ENCODE measurements at regions of chr4 and their contacts with region 1.

Region 1: GRCh38 chr4:174714393-174715211 is 114.4 kb downstream of the GLRA3 start:
- DNase-seq: peak; percentile 23
- H3K4me3 Mint-ChIP-seq: no peak overlapping the region
- H3K27ac Mint-ChIP-seq: no peak overlapping the region
- H3K4me1 Mint-ChIP-seq: no peaks in the 10 kb centered on the region
- H3K27me3 Mint-ChIP-seq: no peaks in the 10 kb centered on the region

Region 2: DNA sequence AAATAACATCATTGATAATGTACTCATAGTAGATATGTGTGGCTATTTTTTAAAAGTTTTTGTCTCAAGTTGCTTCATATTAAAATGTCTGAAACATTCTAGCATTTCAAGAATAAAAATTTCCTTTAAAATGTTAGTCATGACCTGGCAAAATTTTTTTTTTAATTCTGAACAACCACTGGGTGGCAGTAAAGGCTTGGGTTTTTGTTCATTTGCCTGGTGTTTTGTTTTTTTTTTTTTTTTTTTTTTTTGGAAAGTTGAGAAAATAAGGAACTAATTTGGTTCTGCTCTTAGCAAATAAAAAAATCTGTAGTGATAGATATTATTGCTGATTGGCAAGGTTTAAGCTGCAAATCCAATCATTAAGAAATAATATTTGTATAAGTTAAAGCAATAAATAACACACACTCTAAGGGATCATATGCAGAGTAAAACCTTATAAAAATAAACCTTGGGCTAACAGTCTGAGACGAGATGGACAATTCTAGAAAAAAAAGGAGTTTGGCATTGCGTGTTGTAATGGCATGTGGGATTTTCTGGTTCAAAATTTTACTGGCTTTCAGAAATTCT is 349.5 kb before region 1 on chr4:
- CTCF ChIA-PET with region 1: interaction called, 4 read pairs
- POLR2A ChIA-PET with region 1: no interaction called
- intact Hi-C with region 1: loop called (anchors 2 kb)
- DNase-seq: no peak
- H3K4me3 Mint-ChIP-seq: no peak overlapping the region
- H3K27ac Mint-ChIP-seq: no peak overlapping the region
- H3K4me1 Mint-ChIP-seq: no peaks in the 10 kb centered on the region
- H3K27me3 Mint-ChIP-seq: peaks cover 8% of the 10 kb centered on the region

Region 3: DNA sequence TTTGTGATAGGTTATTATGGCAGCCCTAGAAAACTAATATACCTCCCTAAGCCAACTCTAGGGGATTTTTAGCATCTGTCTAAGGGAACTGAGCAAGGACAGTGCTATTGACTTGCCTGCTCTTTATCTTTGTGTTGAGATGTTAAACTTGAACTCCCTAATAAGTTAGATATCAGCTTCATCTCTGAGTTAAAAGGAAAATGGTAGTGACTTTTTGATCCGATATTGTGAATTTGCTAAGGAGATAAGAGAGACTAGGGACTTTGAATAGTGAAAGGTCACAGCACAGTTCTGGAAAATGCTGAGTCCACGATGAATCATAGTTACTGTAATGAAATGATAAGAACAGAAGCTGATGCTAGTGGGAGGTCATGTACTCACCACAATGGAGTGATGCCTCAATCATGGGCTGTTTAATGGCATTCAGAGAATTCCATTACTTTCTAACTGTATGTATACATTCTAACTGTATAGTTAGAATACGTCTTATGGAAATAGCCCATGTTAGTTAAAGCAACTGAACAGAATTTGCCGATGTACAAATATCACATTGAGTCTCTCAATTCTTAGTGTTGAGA is 32.8 kb before region 1 on chr4:
- CTCF ChIA-PET with region 1: no interaction called
- POLR2A ChIA-PET with region 1: no interaction called
- intact Hi-C with region 1: no loop called
- DNase-seq: no peak
- H3K4me3 Mint-ChIP-seq: no peak overlapping the region
- H3K27ac Mint-ChIP-seq: no peak overlapping the region
- H3K4me1 Mint-ChIP-seq: peaks cover 2% of the 10 kb centered on the region
- H3K27me3 Mint-ChIP-seq: no peaks in the 10 kb centered on the region

Region 4: GRCh38 chr4:175054980-175055379 is 340.4 kb after region 1 on chr4:
- CTCF ChIA-PET with region 1: no interaction called
- POLR2A ChIA-PET with region 1: no interaction called
- intact Hi-C with region 1: no loop called
- DNase-seq: no peak
- H3K4me3 Mint-ChIP-seq: no peak overlapping the region
- H3K27ac Mint-ChIP-seq: no peak overlapping the region
- H3K4me1 Mint-ChIP-seq: no peaks in the 10 kb centered on the region
- H3K27me3 Mint-ChIP-seq: no peaks in the 10 kb centered on the region